Mammary epithelial cell (primary cell): ENCODE measurements at regions of chr19 and their contacts with region 1.

Region 1: DNA sequence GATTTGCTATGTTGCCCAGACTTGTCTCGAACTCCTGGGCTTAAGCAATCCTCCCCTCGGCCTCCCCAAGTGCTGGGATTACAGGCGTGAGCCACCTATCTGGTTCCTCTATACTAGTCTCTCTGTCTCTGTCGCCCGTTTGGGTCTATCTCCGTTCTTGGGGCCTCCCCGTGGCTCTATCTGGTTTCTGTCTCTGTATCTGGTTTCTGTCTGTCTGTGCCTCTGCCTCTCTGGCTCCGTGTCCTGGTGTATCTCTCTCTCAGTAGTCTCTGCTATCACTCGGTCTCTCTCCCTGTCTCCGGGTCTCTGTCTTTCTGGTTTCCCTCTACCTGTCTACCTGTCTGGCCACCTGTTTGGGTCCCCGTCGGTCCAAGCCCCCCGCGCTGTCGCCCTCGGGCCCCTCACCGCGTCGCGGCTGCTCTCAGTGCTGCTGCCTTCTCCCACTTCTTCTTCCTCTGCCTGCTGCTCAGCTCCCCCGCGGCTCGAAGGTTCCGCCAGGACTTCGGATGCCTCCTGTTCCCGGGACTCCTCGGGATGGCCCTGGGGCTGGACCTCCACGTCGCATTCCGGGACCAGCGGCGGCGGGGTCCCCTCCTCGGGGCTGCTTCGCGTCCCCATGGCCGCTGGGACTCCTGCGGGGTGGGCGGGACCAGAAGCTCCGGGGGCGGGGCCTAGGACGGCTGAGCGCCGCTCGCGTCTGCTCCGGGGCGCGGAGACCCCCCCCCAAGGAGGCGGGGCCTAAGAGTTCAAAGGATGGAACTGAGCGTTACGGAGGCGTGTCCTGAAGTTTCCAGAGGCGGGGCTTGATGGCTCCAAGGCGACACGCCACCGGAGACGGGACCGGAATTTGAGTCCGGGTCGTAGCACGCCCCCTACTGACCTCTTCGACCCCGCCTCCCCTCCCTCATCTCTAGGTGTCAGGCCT is 783 bp downstream of the PHLDB3 start:
- DNase-seq: peak; percentile 85
- H3K4me3 ChIP-seq: peak overlapping the region; percentile 82 to 90 (median 88)
- H3K27ac ChIP-seq: peak overlapping the region; percentile 86
- H3K4me1 ChIP-seq: peaks cover 14% of the 10 kb centered on the region
- H3K27me3 ChIP-seq: no peaks in the 10 kb centered on the region
- CTCF ChIP-seq: no peak

Region 2: DNA sequence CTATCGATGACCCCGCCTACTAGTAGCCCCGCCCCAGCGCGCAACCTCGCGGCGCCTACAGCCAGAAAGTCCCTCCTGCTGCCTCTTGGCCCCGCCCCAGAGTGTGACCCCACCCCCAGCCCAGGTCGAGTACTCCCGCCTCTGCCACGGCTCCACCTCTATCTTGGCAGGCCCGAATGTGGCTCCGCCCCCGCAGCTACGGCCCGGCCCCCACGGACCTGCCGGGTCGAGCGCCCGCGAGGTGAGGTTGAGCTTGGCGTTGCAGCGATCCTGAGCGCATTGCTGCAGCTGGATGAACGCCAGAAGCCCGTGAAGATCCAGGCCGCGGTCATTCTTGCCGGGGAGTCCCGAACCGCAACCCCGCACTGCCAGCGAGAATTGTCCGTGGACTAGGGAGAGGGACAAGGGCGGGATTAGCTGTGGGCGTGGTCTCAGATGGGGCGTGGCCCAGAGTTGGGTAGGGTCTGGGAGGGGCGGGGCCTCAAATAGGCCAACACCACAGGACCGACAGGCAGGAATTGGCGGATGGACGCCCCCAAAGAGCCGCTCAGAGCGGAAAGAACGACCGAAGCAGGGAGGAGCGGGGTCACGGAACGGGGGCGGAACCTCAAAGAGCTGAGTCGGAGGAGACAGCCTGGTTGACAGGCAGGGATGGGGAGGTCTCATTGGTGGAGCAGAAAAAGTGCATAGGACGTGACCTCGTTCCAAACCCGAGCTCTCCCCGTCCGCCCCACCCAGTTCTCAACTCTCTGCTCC is 40.2 kb before region 1 on chr19:
- CTCF ChIA-PET with region 1: interaction called, 9 read pairs
- dilution Hi-C with region 1: no loop called
- in situ Hi-C with region 1: no loop called
- intact Hi-C with region 1: loop called (anchors 5 kb)
- DNase-seq: peak; percentile 91
- H3K4me3 ChIP-seq: peak overlapping the region; percentile 32 to 79 (median 54)
- H3K27ac ChIP-seq: peak overlapping the region; percentile 53
- H3K4me1 ChIP-seq: peaks cover 37% of the 10 kb centered on the region
- H3K27me3 ChIP-seq: no peaks in the 10 kb centered on the region
- CTCF ChIP-seq: no peak

Region 3: GRCh38 chr19:43519436-43520088 is 15.8 kb after region 1 on chr19:
- CTCF ChIA-PET with region 1: interaction called, 8 read pairs
- dilution Hi-C with region 1: no loop called
- in situ Hi-C with region 1: no loop called
- intact Hi-C with region 1: loop called (anchors 2 kb)
- DNase-seq: peak; percentile 93
- H3K4me3 ChIP-seq: no peak overlapping the region
- H3K27ac ChIP-seq: peak overlapping the region; percentile 71
- H3K4me1 ChIP-seq: peaks cover 16% of the 10 kb centered on the region
- H3K27me3 ChIP-seq: no peaks in the 10 kb centered on the region
- CTCF ChIP-seq: peak; percentile 87 to 88

Region 4: DNA sequence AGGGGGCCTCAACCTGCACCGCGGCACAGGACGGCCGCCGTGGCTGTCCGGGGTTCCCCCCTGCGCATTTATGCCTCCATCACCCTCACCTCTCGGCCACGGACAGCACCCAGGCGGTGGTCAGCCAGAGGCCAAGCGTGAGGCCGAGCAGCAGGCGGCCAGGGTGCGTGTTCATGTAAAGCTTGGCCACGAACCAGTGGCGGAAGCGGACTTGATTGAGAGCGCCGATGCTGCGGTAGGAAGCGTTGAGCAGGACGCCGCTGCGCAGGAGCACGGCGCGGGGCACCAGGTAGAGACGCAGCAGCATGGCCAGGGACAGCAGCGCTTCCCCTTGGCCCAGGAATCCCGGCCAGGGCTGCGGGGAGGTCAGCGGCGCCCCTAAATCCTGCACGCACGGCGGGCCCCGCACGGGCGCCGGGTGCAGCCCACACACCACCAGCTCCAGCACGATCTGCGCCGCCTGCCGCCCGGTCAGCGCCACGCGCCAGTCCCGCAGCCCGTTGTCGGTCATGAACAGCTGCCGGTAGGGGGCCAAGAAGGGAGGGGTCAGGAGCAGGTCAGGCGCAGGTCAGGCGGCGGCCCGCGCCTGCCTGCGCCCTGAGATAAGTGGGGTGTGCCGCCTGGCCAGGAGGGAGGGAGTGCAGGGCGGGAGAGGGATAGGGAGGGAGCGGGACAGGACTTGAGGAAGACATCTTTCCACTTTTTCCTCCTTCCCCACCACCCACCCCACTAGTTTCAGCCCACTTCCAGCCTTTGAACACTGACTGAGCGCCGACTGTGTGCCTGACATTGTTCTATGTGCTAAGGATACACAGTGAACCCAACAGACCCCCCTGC is 270.6 kb after region 1 on chr19:
- CTCF ChIA-PET with region 1: no interaction called
- dilution Hi-C with region 1: no loop called
- in situ Hi-C with region 1: no loop called
- intact Hi-C with region 1: no loop called
- DNase-seq: no peak
- H3K4me3 ChIP-seq: no peak overlapping the region
- H3K27ac ChIP-seq: no peak overlapping the region
- H3K4me1 ChIP-seq: peaks cover 42% of the 10 kb centered on the region
- H3K27me3 ChIP-seq: no peaks in the 10 kb centered on the region
- CTCF ChIP-seq: no peak